BJ (cell line): ENCODE measurements at regions of chr1 and their contacts with region 1.

Region 1: DNA sequence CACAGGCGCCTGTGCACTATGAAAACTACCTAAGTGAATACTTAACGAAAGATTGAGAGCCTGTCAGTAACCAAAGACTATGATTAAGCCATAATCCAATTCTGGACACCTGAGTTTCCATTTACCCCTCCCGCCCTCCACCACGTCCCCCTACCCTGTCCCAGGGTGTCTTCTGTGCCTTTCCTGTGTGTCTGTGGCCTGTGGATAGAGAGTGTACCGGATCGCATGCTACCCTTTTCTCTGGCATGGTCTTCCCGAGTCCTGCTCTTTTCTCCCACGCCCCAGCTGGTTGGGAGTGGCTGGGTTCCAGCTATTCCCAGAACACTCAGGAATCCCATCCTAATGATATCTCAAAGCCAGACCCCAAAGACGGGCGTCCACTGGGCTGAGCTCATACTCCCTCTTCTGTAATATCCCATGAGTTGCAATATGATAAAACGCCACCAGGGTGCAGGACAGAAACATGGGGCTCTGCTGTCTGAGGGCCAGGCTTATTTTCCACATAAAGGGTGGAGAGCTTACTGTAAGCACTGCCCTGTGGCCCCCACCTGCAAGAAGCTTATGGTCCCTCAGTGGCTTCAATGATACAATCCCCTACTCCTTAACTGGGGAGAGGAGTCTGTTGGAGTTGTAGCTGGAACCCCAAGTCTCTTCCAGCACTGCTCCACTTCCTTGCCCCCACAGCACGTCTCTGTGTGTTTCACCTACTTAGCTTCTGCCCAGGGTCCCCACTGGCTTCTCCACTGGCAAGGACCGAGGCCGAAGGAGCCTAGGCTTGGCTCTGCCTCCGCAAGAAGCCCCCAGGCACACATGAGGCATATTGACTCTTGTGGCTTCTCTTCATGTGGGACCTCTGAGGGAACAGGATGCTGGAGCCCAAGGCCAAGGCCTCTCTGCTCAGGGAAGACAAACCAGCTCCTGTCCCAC is 17.6 kb upstream of the ALX3 start:
- DNase-seq: no peak
- H3K4me3 ChIP-seq: no peak overlapping the region
- H3K27me3 ChIP-seq: peaks cover 2% of the 10 kb centered on the region
- CTCF ChIP-seq: peak; percentile 76

Region 2: GRCh38 chr1:109783429-109783831 is 304.6 kb before region 1 on chr1:
- CTCF ChIA-PET with region 1: no interaction called
- POLR2A ChIA-PET with region 1: no interaction called
- DNase-seq: no peak
- H3K4me3 ChIP-seq: no peak overlapping the region
- H3K27me3 ChIP-seq: no peaks in the 10 kb centered on the region
- CTCF ChIP-seq: no peak

Region 3: GRCh38 chr1:110034451-110035235 is 53.4 kb before region 1 on chr1 and contains the start of gene STRIP1:
- CTCF ChIA-PET with region 1: interaction called, 13 read pairs
- POLR2A ChIA-PET with region 1: interaction called, 4 read pairs
- DNase-seq: peak; percentile 87
- H3K4me3 ChIP-seq: peak within 1 kb of the TSS; percentile 79
- H3K27me3 ChIP-seq: no peaks in the 10 kb centered on the region
- CTCF ChIP-seq: no peak
- polyA plus RNA-seq, gene STRIP1: 37.3 and 46.2 TPM in 2 replicates

Region 4: DNA sequence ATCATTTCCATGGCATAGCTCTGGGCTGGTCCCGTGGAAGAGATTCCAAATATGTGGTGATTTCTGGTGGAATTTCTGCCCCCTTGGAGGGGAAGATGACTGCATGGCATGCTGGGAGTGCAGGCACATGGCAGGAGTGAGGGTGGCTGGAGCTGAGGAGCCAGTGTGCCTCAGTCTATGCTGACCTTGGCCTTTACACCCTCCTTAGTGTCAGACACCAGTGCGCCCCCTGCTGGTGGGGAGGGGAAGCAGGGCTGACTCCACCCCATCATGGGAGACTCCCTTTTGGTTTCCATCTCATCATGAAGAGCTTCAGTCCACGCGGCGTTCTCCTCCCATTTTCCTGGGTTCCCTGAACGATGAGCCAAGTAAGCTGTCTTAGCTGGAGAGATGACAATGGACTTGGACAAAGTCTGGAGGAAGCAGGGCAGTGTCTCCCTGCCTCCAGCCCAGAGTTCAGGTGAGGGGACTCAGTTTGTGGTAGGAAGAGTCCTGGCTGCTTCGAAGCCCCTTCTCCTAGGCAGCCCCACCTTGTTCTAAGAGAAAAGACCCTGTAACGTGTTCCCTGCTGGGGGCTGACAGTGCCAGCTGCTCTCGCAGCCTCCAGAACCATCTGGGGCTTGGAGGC is 27.9 kb before region 1 on chr1:
- CTCF ChIA-PET with region 1: interaction called, 100 read pairs
- POLR2A ChIA-PET with region 1: no interaction called
- DNase-seq: no peak
- H3K4me3 ChIP-seq: no peak overlapping the region
- H3K27me3 ChIP-seq: no peaks in the 10 kb centered on the region
- CTCF ChIP-seq: peak; percentile 75

Region 5: DNA sequence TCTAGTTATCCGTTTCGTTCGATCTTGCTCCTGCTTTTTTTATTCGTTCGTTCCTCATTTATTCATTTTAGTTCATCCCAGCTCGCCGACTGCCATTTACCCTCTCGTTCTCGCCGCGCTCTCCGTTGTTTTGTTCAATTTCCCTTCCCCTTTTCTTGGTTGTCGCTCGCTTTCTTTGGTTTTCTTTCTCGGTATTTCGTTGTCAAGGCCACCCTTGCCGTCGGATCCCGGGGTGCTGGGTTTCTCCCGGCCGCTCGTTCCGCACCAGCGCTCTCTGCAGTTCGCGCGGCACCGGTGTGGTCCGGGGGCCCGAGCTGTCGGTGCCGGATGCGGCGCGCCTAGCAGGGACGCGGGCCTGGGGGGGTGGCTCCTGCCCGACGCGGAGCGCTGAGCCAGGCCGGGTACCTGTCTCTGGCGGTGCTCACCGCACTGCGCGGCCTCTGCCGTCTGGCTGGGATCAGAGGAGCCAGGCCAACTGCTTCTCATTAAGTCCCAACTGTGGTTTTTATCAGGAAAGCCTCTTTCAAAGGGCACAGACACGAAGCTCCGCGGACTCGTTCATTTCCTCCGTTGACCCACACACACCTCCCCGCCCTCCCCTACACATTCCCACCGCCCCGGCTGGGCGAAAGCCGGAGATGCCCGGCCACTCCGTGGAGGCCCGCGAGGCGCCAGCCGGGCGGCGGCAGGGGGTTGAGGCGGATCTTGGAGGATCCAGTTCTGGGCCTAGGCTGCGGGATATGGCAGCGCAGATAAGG is 19.2 kb before region 1 on chr1:
- CTCF ChIA-PET with region 1: interaction called, 19 read pairs
- POLR2A ChIA-PET with region 1: no interaction called
- DNase-seq: no peak
- H3K4me3 ChIP-seq: peak overlapping the region; percentile 43
- H3K27me3 ChIP-seq: peaks cover 25% of the 10 kb centered on the region
- CTCF ChIP-seq: no peak

Region 6: DNA sequence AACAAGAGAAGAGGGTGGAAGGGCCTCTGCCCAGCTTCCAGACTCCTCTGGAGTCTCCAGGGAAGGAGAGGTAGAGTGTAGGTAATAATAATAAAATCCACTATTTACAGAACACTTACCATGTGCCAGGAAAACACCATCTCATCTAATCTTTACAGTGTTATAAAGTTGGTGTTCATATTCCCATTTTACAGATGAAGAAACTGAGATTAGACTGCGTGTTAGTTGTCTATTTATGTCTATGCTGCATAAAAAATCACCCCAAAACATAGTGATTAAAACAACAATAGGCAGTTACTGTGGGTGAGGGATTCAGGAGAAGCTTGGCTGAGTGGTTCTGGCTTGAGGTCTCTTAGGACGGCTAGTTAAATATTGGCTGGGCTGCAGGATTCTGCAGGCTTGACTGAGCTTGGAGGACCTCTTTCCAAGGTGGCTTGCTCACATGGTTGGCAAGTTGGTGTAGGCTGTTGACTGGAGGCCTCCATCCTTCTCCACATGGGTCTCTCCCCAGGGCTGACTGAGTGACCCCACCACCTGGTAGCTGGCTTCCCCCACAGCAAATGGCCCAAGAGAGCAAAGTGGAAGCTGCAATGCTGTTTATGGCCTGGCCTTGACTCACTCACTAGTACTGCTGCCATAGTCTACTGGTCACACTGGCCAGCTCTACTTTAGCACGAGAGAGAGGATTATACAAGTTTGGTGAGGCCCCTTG is 11.1 kb before region 1 on chr1:
- CTCF ChIA-PET with region 1: interaction called, 19 read pairs
- POLR2A ChIA-PET with region 1: no interaction called
- DNase-seq: no peak
- H3K4me3 ChIP-seq: no peak overlapping the region
- H3K27me3 ChIP-seq: peaks cover 8% of the 10 kb centered on the region; the same call in 1 of the 2 replicates
- CTCF ChIP-seq: no peak

Region 7: GRCh38 chr1:110106013-110106941 is 18.2 kb after region 1 on chr1:
- CTCF ChIA-PET with region 1: interaction called, 246 read pairs
- POLR2A ChIA-PET with region 1: interaction called, 7 read pairs
- DNase-seq: no peak
- H3K4me3 ChIP-seq: no peak overlapping the region
- H3K27me3 ChIP-seq: no peaks in the 10 kb centered on the region
- CTCF ChIP-seq: peak; percentile 90

Region 8: GRCh38 chr1:110118636-110119615 is 30.9 kb after region 1 on chr1:
- CTCF ChIA-PET with region 1: interaction called, 10 read pairs
- POLR2A ChIA-PET with region 1: no interaction called
- DNase-seq: no peak
- H3K4me3 ChIP-seq: no peak overlapping the region
- H3K27me3 ChIP-seq: no peaks in the 10 kb centered on the region
- CTCF ChIP-seq: no peak